Mucosa of descending colon (tissue), 3 donors: ENCODE measurements at regions of chr13 and their contacts with region 1.

Region 1: DNA sequence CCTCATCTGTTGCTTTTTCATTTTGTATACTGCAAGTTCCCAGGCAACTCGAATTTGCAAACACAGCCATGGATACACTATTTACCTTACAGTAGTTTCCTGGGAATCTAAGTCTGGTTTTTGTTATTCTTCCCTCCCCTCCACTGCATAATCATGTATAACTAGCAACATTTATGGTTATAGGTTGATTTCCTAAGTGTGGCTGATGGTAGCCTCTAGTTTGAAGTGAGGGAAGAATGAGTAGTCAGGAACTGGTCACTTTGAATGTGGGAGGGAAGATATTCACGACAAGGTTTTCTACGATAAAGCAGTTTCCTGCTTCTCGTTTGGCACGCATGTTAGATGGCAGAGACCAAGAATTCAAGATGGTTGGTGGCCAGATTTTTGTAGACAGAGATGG is at the start of gene KCNRG:
- DNase-seq: no peak
- ATAC-seq: peak; percentile 91
- H3K4me3 ChIP-seq: no peak within 1 kb of the TSS
- H3K4me1 ChIP-seq: no peaks in the 10 kb centered on the region
- CTCF ChIP-seq: no peak
- total RNA-seq, gene KCNRG: 0.66 to 1.2 (median 1.1) TPM

Region 2: DNA sequence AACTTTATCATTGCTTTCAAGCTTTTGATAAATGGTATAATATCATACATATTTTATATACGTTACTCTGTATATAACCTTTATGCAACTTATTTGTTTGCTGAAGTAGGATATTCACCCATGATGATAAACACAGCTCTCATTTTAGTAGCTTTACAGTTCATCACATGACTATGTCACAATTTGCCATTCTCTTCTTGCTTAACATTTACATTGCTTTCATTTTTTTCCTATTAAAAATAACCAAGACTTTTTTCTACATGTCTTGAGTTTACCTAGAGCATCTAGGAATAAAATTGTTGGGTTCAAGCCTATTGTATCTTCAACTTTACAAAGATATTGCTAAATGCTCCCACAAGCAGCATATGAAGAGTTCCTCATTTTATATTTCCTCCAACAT is 54.0 kb after region 1 on chr13:
- intact Hi-C with region 1: loop called in 1 of 2 experiments (anchors 10 kb)
- DNase-seq: no peak
- ATAC-seq: no peak
- H3K4me3 ChIP-seq: no peak overlapping the region
- H3K4me1 ChIP-seq: no peaks in the 10 kb centered on the region
- CTCF ChIP-seq: no peak